ENCODE measurements at regions of chr6 and their contacts with region 1.

Region 1: DNA sequence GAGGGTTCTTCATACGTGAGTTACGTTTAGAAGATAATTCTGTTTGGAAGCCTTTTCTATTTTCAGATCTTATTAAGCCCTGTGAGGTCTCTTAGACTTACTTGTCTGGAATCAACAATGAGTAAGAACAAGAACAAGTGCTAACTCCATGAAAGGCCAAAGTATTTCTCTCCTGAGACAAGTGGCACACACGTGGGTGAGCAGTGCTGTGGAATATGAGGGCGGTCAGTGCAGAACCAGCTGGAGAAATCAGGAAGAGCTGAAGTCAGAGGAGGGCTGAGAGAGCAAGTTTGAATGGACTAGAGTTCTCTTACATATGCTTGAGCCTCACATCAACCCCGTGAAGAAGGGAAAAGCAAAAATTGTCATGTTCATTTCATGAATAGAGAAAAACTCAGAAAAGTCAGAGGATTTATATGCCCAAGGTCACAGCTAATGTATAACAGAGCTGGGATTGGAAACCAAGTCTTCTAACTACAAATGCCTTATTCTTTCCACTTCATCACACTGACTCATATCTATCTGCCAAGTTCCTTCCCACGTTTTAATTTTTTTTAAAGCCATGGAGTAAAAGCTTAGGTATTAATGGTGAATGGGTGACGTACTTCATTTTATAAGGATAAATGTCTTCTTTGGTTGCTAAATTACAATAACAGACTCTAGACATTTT is 201.3 kb upstream of the DTNBP1 start:
- DNase-seq: no peak

Region 2: DNA sequence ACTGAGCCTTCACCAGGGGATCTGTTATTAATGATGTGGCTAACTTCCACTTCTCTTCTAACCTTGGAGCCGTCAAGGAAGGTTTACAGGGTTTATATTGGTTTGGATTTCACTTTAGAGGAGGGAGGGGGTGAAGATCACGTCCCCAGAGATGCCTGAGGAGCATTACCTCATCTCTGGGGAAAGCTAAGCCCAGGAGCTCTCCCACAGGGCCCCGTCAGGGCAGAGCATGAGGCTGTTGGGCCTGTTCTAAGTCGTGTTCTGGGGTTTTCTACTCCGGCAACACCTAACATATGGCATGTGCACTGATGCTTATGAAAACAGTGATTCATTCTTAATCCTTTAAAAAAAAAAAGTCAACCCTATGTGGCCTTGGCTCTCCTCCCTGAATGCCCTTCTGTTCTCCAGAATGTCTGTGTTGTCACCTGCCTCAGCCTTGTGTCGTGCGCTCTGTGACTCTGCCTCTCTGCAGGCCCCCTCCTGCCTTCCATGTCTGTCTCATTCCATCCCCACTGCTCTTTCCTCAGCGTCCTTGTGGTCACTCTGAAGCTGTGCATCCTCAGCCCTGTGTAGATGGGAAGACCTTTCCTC is 715.7 kb before region 1 on chr6:
- intact Hi-C with region 1: no loop called
- DNase-seq: no peak

Region 3: DNA sequence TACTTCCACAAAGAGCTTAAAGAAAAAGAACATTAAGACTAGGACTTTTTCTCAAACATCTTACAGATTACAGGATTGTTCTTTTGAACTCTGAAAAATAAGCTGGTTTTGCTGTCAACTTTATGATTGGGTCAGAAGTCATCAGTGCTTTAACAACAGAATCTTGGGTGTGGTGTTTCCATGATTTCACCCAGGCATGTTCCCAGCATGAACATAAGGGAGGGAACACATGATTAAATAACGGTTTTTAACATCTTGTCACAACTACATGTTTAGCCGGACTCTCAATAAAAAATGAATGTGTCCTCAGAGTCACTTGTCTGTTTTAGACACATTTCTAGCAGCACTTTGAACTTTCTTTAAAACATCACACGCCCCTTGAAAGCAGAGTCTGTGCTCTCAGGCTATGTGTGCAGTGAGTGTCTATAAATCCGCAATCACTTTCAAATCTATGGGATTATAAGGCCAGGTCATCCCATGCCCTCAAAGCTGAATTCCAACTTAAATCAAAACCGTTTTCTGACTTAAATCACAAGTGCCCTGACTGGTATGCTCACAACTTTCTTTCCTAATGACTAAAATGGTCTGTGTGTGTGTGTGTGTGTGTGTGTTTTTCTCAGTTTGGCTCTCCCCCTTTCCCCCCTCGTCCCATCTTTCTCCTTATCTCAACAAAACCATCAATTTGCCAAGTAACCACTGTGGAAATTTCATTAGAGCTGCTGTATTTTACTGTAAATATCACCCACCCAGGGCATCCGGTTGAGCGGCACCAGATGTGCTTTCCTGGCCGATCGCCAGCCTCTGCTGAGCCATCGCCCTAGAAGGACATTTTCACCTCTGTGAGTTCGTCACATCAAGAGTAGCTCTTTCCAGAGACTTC is 15.4 kb after region 1 on chr6:
- intact Hi-C with region 1: no loop called
- DNase-seq: peak; percentile 92

Region 4: DNA sequence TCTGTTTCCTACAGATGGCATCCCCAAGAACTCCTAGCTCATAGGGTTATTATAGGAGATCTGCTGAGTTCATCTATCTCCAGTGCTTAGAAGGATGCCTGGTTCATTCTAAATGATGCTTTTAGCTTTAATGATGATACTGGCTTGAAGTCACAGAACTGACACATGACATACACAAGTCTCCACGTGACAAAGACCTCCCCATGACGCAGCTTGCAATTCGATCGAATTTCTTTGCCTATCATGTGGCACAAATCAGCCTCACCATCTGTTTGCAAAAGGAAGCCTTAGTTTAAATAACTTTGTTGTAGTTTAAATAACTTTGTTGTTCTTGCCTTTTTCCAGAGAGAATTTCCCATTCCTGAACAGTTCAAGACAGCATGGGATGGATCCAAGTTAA is 1691.8 kb after region 1 on chr6:
- intact Hi-C with region 1: loop called in 1 of 2 experiments (anchors 5 kb)
- DNase-seq: no peak

Measured in posterior vena cava (tissue), 2 donors.